ENCODE measurements at regions of chr19 and their contacts with region 1.

Region 1: GRCh38 chr19:24086974-24087595 is at the start of gene ZNF254:
- DNase-seq: peak; percentile 96
- ATAC-seq: peak; percentile 100
- H3K4me3 Mint-ChIP-seq: peak within 1 kb of the TSS; percentile 95
- H3K27ac Mint-ChIP-seq: peak within 1 kb of the TSS; percentile 98
- H3K4me1 Mint-ChIP-seq: peaks cover 8% of the 10 kb centered on the region
- H3K27me3 Mint-ChIP-seq: no peaks in the 10 kb centered on the region
- CTCF ChIP-seq: no peak
- total RNA-seq, gene ZNF254: 9.7 to 10.0 TPM

Region 2: GRCh38 chr19:24033301-24033962 is 53.7 kb before region 1 on chr19:
- CTCF ChIA-PET with region 1: no interaction called
- POLR2A ChIA-PET with region 1: interaction called, 19 read pairs
- intact Hi-C with region 1: no loop called
- DNase-seq: peak; percentile 90
- ATAC-seq: peak; percentile 99
- H3K4me3 Mint-ChIP-seq: peak overlapping the region; percentile 99
- H3K27ac Mint-ChIP-seq: peak overlapping the region; percentile 98
- H3K4me1 Mint-ChIP-seq: peaks cover 38% of the 10 kb centered on the region
- H3K27me3 Mint-ChIP-seq: no peaks in the 10 kb centered on the region
- CTCF ChIP-seq: no peak

Region 3: DNA sequence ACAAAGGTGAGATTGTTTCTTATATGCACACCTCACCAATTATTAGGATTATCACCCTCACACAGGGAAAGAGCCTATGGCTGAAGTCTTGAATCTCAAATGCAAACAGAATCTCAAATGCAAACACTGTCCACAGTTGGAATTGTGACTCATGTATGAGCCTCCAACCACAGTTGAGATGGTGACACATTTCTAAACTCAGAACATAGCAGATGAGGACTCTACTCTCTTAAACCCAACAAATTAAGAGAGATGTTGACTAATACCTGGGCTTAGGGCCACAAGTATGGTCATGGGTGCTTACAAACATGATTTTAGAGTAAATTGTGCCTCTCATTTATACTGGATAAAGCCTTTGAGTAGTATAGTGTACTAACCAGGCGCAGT is 32.5 kb before region 1 on chr19:
- CTCF ChIA-PET with region 1: no interaction called
- POLR2A ChIA-PET with region 1: no interaction called
- intact Hi-C with region 1: no loop called
- DNase-seq: peak; percentile 53
- ATAC-seq: peak; percentile 87
- H3K4me3 Mint-ChIP-seq: no peak overlapping the region
- H3K27ac Mint-ChIP-seq: peak overlapping the region; percentile 88
- H3K4me1 Mint-ChIP-seq: peaks cover 15% of the 10 kb centered on the region
- H3K27me3 Mint-ChIP-seq: no peaks in the 10 kb centered on the region
- CTCF ChIP-seq: no peak

Region 4: DNA sequence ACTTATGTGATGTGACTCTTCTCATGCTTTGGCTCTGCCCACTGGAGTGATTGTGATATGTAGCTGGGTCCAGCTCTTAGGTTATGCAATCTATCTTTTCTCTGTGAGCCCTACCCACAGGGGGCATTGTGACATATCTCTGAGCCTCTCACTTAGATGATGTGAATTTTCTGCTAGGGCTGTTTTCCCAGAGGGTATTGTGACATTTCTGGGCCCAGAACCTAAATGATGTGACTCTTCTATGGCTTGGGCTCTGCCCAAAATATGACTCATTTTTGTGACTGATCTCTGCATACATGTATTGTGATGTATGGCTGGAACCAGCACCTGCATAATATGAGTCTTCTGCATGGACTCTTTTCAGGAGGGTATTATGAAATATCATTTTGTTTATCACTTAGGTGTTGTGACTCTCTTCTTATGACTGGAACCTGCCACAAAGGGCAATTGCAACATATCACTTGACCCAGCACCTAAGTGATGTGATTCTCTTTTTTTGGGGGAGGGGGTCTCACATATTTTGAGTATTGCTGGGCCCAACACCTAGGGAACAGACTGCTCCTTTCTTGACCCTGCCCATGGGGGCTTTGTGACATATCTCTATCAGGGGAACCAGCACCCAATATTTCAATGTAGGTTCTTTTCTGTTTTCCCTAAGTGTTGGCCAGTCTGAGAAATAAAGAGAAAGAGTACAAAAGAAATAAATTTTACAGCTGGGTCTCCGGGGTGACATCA is 12.2 kb before region 1 on chr19:
- CTCF ChIA-PET with region 1: no interaction called
- POLR2A ChIA-PET with region 1: no interaction called
- intact Hi-C with region 1: no loop called
- DNase-seq: no peak
- ATAC-seq: peak; percentile 49
- H3K4me3 Mint-ChIP-seq: no peak overlapping the region
- H3K27ac Mint-ChIP-seq: no peak overlapping the region
- H3K4me1 Mint-ChIP-seq: no peaks in the 10 kb centered on the region
- H3K27me3 Mint-ChIP-seq: no peaks in the 10 kb centered on the region
- CTCF ChIP-seq: no peak

Measured in activated CD8-positive, alpha-beta T cell treated with anti-CD3 and anti-CD28 coated beads for 36 hours (primary cell).